Left ventricle myocardium superior (tissue), 1 donor: ENCODE measurements at regions of chr1 and their contacts with region 1.

Region 1: GRCh38 chr1:30779294-30780071 is 21.9 kb upstream of the LAPTM5 start:
- DNase-seq: peak; percentile 88
- ATAC-seq: peak; percentile 74

Region 2: DNA sequence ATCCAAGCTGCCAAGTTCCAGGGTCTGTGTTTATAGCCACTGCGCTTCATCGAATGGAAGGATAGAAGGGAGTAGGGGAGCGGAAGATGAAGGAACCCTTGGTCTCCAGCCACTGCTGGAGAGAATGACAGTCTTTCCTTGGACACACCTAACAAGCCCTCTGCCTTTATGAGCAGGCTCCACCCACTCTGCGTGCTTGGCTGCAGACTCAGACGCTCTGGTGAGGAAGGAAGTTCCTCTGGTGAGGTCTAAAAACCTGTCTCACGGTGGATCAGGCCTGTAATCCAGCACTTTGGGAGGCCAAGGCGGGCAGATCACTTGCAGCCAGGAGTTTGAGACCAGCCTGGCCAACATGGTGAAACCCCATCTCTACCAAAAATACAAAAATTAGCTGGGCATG is 111.5 kb before region 1 on chr1:
- intact Hi-C with region 1: no loop called
- DNase-seq: no peak
- ATAC-seq: no peak

Region 3: GRCh38 chr1:30719406-30720270 is 59.8 kb before region 1 on chr1:
- intact Hi-C with region 1: loop called (anchors 2 kb)
- DNase-seq: no peak
- ATAC-seq: no peak

Region 4: DNA sequence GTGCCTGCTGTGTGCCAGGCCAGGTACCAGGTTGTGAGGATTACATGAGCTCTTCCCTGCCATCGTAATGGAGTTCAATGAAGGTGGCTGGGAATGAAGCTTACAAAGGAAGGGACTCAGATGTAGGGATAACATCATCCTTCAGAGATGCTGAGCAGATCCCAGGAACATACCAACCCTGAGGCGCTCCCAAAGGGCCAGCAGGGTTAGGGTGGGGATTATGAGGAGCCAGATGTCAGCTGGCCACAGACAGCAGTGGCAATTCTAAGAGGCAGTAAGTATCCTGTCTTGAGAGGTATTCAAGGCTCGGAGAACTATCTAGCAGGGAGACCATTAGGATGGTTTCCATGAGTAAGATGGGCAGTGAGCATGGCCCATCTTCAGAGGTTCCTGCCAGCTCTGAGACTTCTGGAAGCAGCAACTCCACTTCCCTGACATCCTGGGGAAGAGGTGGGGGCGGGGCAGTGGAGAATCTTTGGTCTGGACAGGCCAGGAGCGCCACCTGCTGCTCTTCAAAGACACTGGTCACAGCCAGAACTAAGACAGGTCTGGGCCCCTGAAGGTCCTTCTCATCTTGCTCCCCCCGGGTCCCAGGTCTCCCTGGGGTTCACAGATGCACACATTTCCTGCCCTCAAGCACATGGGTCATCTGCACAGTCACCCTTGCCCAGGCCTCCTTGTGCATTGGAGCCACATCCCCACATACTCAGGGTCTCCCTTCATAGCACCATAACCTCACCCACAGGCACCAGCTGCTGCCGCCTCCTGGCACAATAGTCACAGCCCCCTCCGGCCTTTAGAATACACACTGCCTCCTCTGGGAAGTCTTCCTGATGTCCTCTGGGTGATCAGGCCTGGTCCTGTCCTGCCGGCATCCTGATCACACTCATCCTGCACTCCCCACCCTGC is 131.8 kb after region 1 on chr1:
- intact Hi-C with region 1: loop called (anchors 5 kb)
- DNase-seq: peak; percentile 93
- ATAC-seq: peak; percentile 79

Region 5: DNA sequence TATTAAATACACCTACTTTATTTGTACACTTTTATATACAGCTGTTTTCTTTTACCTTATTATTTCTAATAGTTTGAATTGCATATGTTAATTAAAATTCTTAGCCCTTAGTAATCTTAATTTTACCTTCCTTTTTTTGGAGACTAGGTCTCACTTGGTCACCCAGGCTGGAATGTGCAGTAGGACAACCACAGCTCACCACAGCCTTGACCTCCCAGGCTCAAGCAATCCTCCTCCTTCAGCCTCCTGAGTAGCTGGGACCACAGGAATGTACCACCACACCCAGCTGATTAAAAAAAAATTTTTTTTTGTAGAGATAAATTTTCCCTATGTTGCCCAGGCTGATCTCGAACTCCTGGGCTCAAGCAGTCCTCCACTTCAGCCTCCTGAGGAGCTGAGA is 144.1 kb after region 1 on chr1:
- intact Hi-C with region 1: no loop called
- DNase-seq: no peak
- ATAC-seq: no peak